Mammary epithelial cell (primary cell): ENCODE measurements at regions of chr7 and their contacts with region 1.

Region 1: GRCh38 chr7:112898432-112899290 is 108.5 kb upstream of the TMEM168 start:
- DNase-seq: peak; percentile 62
- H3K4me3 ChIP-seq: no peak overlapping the region
- H3K27ac ChIP-seq: no peak overlapping the region
- H3K4me1 ChIP-seq: no peaks in the 10 kb centered on the region
- H3K27me3 ChIP-seq: no peaks in the 10 kb centered on the region
- CTCF ChIP-seq: peak; percentile 81 to 89

Region 2: DNA sequence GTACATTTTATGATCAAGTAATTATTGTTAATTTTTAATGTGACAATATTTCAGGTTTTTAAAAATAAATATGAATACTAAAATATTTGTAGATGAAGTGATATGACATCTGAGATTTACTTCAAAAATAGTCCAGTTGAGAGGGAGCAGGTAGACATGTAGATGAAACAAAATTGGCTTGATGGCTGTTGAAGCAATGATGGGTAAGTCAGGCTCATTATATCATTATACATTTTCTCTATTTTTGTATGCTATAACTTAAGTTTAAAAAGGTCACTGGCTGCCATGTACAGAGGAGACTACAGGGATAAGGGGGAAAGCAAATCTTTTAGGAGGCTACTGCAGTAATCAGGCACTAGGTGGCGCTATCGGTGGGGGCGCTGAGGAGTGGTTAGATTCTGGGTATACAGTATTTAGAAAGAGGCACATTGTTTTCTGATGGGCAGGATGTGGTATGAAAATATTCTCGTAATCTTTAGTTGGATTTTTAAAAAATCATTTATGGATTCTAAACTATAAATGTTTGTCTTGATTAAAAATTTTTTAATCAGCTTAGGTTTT is 1146.6 kb before region 1 on chr7:
- CTCF ChIA-PET with region 1: no interaction called
- dilution Hi-C with region 1: no loop called
- in situ Hi-C with region 1: loop called in 1 of 2 experiments (anchors 25 kb)
- intact Hi-C with region 1: no loop called
- DNase-seq: peak; percentile 30
- H3K4me3 ChIP-seq: no peak overlapping the region
- H3K27ac ChIP-seq: no peak overlapping the region
- H3K4me1 ChIP-seq: peaks cover 5% of the 10 kb centered on the region
- H3K27me3 ChIP-seq: no peaks in the 10 kb centered on the region
- CTCF ChIP-seq: peak; percentile 88 to 94

Region 3: DNA sequence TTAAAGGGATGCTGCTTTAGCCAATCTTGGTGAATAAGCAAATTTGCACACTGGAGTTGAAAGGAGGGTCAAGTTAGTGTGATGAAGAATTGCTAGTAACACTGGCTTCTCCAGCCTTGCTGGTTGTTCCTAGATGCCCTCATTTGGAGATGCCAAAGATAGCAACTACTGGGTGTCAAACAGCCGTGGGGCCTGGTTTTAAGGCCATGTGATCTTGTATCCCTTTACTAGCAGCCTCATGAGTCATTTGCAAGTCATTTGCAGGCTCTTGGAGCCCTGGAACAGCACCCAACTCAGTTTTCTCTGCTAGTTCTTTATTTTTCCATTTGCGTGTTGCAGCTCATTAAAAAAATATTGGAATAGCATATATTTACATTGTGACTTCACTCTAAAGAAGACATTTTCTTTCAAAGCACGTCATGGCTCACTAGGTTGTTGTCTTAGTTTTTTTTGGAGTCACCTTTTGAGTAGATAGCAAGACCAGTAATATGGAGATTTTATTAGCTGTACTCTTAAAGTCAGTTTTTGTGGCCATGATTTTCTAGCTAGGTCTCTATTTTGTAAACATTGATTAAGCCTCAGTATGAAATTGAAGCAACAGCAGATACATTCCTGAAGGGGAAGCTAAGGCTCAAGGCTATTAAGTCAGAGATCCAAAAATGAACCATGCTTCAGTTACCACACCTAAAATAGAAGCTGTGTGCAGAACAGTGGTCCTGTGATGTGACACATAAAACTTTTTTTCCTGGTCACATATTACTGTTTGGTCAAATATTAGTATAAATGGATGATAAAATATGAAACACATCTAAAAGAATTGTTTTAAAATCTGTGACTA is 416.6 kb before region 1 on chr7:
- CTCF ChIA-PET with region 1: no interaction called
- dilution Hi-C with region 1: no loop called
- in situ Hi-C with region 1: no loop called
- intact Hi-C with region 1: loop called (anchors 1 kb)
- DNase-seq: peak; percentile 89
- H3K4me3 ChIP-seq: no peak overlapping the region
- H3K27ac ChIP-seq: peak overlapping the region; percentile 17
- H3K4me1 ChIP-seq: peaks cover 28% of the 10 kb centered on the region
- H3K27me3 ChIP-seq: no peaks in the 10 kb centered on the region
- CTCF ChIP-seq: no peak

Region 4: DNA sequence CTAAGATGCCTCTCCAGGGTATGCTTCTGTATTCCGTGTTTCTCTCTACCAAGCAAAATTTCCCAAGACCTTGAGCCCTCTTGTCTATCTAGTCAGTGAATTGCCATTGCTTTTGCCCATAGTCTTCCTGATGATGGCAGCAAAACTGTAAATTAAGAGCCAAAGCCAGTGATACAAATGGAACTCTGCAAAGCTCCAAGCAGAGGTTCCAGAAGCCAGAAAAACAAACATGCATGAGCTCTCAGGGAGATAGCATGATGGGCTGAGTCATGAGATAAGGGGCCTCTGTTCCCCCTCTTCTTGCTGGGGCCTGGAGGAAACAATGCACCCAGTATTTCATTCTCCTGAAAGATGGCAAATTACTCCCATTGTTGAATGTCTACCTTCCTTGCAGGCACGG is 393.2 kb before region 1 on chr7:
- CTCF ChIA-PET with region 1: no interaction called
- dilution Hi-C with region 1: no loop called
- in situ Hi-C with region 1: no loop called
- intact Hi-C with region 1: loop called (anchors 2 kb)
- DNase-seq: no peak
- H3K4me3 ChIP-seq: no peak overlapping the region
- H3K27ac ChIP-seq: no peak overlapping the region
- H3K4me1 ChIP-seq: peaks cover 9% of the 10 kb centered on the region
- H3K27me3 ChIP-seq: no peaks in the 10 kb centered on the region
- CTCF ChIP-seq: peak in 1 of 2 donors; percentile 10

Region 5: DNA sequence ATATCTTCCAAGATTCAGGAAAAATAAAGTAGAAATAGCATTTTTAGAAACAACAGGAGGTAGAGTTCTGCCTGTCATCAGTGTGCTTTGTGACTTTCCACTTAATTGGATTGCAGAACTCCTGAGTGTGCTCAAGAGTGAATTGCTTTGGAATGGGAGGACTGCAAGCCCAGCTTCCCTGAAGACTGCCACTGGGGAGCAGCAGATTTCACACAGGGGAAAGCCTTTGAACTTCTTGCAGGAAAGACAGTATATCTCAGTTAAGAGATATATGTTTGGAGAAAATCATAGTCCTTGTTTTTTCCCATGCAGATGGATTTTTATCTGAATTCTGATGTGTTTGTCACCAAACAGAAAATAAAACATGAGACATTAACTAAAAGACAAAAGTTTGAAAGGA is 232.9 kb before region 1 on chr7:
- CTCF ChIA-PET with region 1: no interaction called
- dilution Hi-C with region 1: no loop called
- in situ Hi-C with region 1: no loop called
- intact Hi-C with region 1: loop called (anchors 1 kb)
- DNase-seq: peak; percentile 24
- H3K4me3 ChIP-seq: no peak overlapping the region
- H3K27ac ChIP-seq: no peak overlapping the region
- H3K4me1 ChIP-seq: peaks cover 9% of the 10 kb centered on the region
- H3K27me3 ChIP-seq: no peaks in the 10 kb centered on the region
- CTCF ChIP-seq: peak; percentile 16 to 61